H1 (cell line): ENCODE measurements at regions of chr1 and their contacts with region 1.

Region 1: DNA sequence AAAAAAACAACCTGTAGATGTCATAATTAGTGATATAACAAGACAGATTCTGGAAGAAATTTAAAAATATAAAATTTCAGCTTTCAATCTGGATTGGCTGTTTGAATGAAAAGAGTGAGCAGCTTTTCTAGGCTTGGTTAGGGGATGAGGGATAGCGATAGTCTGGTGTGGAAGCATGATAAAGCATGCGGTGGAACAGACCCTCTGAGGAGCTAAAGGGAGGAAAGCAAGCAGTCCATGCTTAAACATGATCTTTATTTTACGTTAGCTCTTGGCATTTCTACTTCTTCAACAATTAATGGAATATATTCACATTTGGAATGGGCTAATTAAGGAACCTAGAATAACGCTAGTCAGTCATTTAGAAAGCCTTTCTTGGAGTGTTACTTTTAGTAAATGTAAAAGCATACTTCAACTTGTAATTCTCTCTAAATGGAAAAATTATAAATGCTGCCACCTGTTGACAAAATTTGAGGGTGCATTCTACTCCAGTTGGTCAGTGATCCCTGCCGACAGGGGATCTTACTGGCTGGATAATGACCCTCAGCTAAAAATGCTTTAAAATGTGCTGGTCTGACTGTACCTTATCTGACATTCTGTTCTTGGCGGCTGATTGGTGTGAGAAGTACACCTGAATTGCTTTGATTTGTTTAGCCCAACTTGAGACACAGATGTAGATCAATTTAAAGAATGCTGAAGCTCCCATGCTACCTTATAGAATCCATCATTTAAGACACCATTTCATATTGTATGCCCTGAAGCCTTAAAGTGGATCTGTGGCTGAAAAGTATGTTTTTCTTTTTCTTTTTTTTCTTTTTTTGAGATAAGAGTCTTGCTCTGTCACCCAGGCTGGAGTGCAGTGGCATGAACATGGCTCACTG is 61.2 kb downstream of the AK4 start:
- DNase-seq: peak in 1 of 2 experiments; percentile 42
- H3K4me3 ChIP-seq: no peak overlapping the region
- H3K27ac ChIP-seq: no peak overlapping the region
- H3K4me1 ChIP-seq: peaks cover 0 to 3% (median 0%) of the 10 kb centered on the region in 4 experiments; a peak in 2 of 7 replicates
- H3K27me3 ChIP-seq: no peaks in the 10 kb centered on the region
- CTCF ChIP-seq: peak; percentile 5 to 54 (median 42)
- EP300 ChIP-seq: no peak
- POLR2A ChIP-seq: no peak
- RAD21 ChIP-seq: peak; percentile 40 to 49

Region 2: DNA sequence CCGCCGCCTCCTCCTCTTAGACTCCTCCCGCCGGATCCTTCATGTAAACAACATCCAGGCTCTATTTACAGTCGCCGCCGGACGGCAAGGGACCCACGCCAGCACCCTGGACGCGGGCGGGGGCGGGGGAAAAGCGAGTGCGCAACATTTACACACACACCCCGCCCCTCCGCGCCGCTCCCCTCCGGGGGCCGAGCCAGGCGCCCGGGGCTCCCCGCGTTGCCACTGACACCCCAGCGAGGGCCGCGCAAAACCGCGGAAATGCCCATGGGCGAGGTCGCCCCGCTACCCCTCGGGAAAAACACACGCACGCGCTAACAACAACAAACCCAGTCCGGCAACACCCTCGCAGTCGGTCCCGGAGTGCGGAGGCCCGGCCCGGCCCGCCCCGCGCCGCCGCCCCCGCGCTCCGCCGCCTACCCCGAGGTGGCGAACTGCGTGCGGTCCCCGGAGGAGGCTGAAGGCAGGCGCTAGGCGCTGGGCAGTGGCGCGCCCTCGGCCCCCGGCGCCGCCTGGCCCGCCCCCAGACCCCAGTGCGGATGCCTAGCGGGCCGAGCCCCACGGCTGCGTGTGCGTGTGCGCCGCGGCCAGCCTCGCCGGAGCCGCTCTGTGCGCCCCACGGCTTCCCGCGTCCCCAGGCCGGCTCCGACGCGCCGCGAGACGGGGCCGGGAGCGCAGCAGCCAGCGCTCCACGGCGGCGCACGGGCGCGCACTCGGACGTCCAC is 142.3 kb before region 1 on chr1:
- CTCF ChIA-PET with region 1: interaction called, 27 read pairs
- POLR2A ChIA-PET with region 1: no interaction called
- DNase-seq: peak in 1 of 2 experiments; percentile 73
- H3K4me3 ChIP-seq: peak overlapping the region; percentile 74 to 96 (median 82)
- H3K27ac ChIP-seq: peak overlapping the region; percentile 96
- H3K4me1 ChIP-seq: peaks cover 0 to 10% (median 4%) of the 10 kb centered on the region in 4 experiments; a peak in 3 of 7 replicates
- H3K27me3 ChIP-seq: no peaks in the 10 kb centered on the region; a peak in 1 of 7 replicates
- CTCF ChIP-seq: no peak
- EP300 ChIP-seq: no peak
- POLR2A ChIP-seq: peak in 1 of 2 experiments; percentile 65; a peak in 2 of 3 replicates
- RAD21 ChIP-seq: no peak; a peak in 1 of 4 replicates

Region 3: DNA sequence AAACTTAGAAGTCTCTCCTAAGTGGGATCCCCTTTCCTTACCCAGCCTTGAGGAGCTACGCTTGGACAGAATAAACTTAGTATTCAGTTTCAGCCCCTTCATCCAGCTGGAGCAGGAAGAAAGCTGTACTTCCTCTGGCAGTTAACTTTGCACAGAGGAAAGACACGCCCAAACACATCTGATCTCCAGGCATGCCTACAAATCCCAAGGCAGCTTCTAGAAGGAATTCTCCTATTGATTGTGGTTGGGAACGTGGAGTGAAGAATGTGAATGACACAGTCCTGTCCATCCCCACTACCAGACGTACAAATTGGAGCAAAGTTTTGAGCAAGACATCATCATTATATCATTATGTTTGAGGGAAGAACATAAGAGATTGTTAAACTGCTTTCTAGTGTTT is 67.9 kb before region 1 on chr1:
- CTCF ChIA-PET with region 1: interaction called, 10 read pairs
- POLR2A ChIA-PET with region 1: no interaction called
- DNase-seq: no peak
- H3K4me3 ChIP-seq: no peak overlapping the region
- H3K27ac ChIP-seq: no peak overlapping the region
- H3K4me1 ChIP-seq: peaks cover 0 to 4% (median 0%) of the 10 kb centered on the region in 4 experiments; a peak in 2 of 7 replicates
- H3K27me3 ChIP-seq: peaks cover 1 to 8% (median 5%) of the 10 kb centered on the region in 4 experiments; a peak in 6 of 7 replicates
- CTCF ChIP-seq: no peak
- EP300 ChIP-seq: no peak
- POLR2A ChIP-seq: no peak
- RAD21 ChIP-seq: no peak

Region 4: DNA sequence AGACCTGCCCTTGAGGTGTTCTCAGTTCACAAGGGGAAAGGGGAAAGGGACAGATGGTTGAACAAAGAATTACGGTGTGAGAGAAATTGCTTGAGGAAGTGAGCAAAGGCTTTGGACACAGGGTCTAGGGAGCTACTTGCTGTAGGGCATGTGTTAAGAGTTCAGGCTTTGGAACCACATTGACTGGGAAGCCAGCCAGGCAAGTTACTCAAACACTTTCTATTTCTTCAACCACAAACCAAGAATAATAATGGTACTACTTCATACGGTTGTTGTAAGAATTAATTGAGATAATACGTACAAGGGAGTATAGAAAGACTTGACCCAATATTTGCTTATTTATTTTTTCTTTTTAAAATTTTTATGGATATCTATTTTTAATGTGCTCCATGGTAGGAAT is 34.7 kb before region 1 on chr1:
- CTCF ChIA-PET with region 1: interaction called, 38 read pairs
- POLR2A ChIA-PET with region 1: interaction called, 3 read pairs
- DNase-seq: no peak
- H3K4me3 ChIP-seq: no peak overlapping the region
- H3K27ac ChIP-seq: no peak overlapping the region
- H3K4me1 ChIP-seq: peaks cover 4 to 23% (median 11%) of the 10 kb centered on the region in 4 experiments
- H3K27me3 ChIP-seq: no peaks in the 10 kb centered on the region
- CTCF ChIP-seq: no peak
- EP300 ChIP-seq: no peak
- POLR2A ChIP-seq: no peak
- RAD21 ChIP-seq: no peak

Region 5: GRCh38 chr1:65230731-65231481 is 21.7 kb after region 1 on chr1:
- CTCF ChIA-PET with region 1: interaction called, 11 read pairs
- POLR2A ChIA-PET with region 1: interaction called, 3 read pairs
- DNase-seq: no peak
- H3K4me3 ChIP-seq: no peak overlapping the region
- H3K27ac ChIP-seq: no peak overlapping the region
- H3K4me1 ChIP-seq: no peaks in the 10 kb centered on the region
- H3K27me3 ChIP-seq: no peaks in the 10 kb centered on the region
- CTCF ChIP-seq: no peak
- EP300 ChIP-seq: no peak
- POLR2A ChIP-seq: no peak
- RAD21 ChIP-seq: no peak

Region 6: GRCh38 chr1:65267683-65268082 is 58.4 kb after region 1 on chr1:
- CTCF ChIA-PET with region 1: no interaction called
- POLR2A ChIA-PET with region 1: no interaction called
- DNase-seq: no peak
- H3K4me3 ChIP-seq: no peak overlapping the region
- H3K27ac ChIP-seq: no peak overlapping the region
- H3K4me1 ChIP-seq: peaks cover 0 to 5% (median 3%) of the 10 kb centered on the region in 4 experiments; a peak in 5 of 7 replicates
- H3K27me3 ChIP-seq: no peaks in the 10 kb centered on the region; a peak in 3 of 7 replicates
- CTCF ChIP-seq: no peak
- EP300 ChIP-seq: no peak
- POLR2A ChIP-seq: no peak
- RAD21 ChIP-seq: no peak

Region 7: DNA sequence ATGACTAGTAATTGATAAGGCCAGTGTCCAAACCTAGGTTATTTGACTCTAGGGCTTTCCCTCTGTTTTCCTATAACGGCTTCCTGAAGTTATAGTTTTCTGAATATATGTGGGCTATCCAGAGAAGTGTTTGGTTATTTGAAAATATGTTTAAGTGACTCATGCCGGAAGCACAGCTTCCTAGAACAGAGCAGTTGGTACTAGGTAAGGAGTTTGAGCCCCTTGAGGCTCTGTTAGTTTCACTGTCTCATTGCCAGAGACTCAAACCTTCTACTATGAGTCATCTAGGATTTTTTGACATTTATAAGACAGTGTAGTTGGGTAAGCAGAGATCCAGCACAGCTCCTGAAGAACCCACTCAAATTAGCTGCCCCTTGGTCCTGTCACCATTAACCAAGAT is 184.1 kb after region 1 on chr1:
- CTCF ChIA-PET with region 1: no interaction called
- POLR2A ChIA-PET with region 1: no interaction called
- DNase-seq: no peak
- H3K4me3 ChIP-seq: no peak overlapping the region
- H3K27ac ChIP-seq: no peak overlapping the region
- H3K4me1 ChIP-seq: peaks cover 0 to 3% (median under 1%) of the 10 kb centered on the region in 4 experiments; a peak in 5 of 7 replicates
- H3K27me3 ChIP-seq: no peaks in the 10 kb centered on the region
- CTCF ChIP-seq: no peak
- EP300 ChIP-seq: no peak
- POLR2A ChIP-seq: no peak
- RAD21 ChIP-seq: no peak

Region 8: DNA sequence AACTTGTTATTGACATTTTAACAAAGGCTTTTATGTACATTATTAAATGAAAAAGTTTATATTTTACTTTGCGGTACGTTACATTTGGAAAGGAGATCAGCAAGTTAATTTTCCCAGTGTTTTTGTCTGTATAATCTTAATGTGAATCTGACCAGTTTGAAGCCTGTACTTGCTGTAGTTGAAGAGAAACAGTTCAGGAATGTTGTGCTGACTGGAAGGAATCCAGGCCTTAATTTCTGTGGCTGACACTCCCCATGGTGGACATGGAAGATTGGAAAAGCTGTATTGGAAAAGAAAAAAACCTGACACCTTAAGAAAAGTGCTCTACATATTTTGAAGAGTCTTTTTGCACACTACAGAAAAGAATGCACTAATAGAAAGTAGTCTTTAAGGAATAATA is 226.7 kb after region 1 on chr1:
- CTCF ChIA-PET with region 1: no interaction called
- POLR2A ChIA-PET with region 1: no interaction called
- DNase-seq: no peak
- H3K4me3 ChIP-seq: no peak overlapping the region
- H3K27ac ChIP-seq: no peak overlapping the region
- H3K4me1 ChIP-seq: peaks cover 2 to 14% (median 9%) of the 10 kb centered on the region in 4 experiments; a peak in 5 of 7 replicates
- H3K27me3 ChIP-seq: no peaks in the 10 kb centered on the region
- CTCF ChIP-seq: no peak
- EP300 ChIP-seq: no peak
- POLR2A ChIP-seq: no peak
- RAD21 ChIP-seq: no peak